Posterior vena cava (tissue), 2 donors: ENCODE measurements at regions of chr5 and their contacts with region 1.

Region 1: GRCh38 chr5:43422143-43422542 is 10.0 kb upstream of the CCL28 start:
- DNase-seq: no peak

Region 2: DNA sequence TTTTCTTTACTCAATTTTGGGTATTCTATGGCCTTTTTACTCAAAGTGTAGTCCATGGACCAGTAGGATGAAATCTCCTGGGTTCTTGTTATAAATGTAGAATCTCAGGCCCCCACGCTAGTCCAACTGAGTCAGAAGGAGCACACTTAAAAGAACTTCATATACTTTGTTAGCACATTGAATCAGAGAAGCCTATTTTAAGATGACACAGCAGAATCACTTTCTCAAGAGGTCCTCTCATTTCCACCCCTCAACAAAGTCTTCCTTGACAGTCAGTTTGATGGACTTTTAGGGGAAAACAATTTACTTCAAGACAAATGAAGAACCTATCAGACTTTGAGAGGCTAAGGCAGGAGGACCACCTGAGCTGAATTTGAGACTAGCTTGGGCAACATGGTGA is 1004.8 kb after region 1 on chr5:
- intact Hi-C with region 1: loop called in 1 of 2 experiments (anchors 5 kb)
- DNase-seq: no peak